ENCODE measurements at regions of chr6 and their contacts with region 1.

Region 1: DNA sequence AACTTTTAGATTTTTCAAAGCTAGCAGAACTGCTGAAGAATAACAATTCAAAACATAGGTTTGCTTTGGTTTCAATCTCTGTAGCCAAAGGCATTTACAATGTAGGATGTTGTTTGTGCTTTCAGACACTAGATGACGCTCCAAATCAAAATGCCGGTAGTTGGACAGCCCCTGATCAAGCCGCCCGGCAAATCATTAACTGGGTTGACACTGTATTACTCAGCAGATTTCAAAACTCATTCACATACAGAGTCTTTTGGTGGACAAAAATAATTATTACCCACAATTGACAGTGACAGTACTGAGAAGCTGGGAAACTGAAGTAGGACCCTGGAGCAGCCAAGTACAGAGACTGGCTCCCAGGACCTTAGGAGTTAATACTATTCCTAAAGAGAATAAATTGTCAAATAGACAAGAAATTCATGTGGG is 21.3 kb upstream of the HFE start:
- DNase-seq: no peak
- H3K4me3 ChIP-seq: no peak overlapping the region
- H3K27ac ChIP-seq: no peak overlapping the region
- H3K4me1 ChIP-seq: no peaks in the 10 kb centered on the region
- H3K27me3 ChIP-seq: no peaks in the 10 kb centered on the region
- CTCF ChIP-seq: peak; percentile 22 to 88 (median 77)
- EP300 ChIP-seq: no peak
- POLR2A ChIP-seq: no peak
- RAD21 ChIP-seq: peak; percentile 87 to 92

Region 2: DNA sequence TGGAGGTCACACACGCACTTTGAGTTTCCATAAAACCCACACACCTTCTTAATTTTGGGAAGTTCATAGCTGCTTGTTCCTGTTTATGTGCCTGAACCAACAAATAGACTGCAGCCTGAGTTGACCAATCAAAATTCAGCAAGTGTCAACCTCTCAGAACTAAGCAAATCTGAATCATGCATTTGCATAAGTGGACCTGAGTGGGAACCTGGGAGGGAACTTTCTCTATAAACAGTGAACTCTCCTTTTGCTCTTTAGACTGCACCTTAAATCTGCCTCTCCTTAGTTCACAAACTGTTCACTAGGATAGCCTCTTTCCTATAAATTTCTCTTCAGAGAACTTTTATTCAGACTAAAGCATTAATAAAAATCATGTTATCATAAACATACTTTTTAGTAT is 272.0 kb before region 1 on chr6:
- CTCF ChIA-PET with region 1: no interaction called
- POLR2A ChIA-PET with region 1: no interaction called
- DNase-seq: no peak
- H3K4me3 ChIP-seq: no peak overlapping the region
- H3K27ac ChIP-seq: no peak overlapping the region
- H3K4me1 ChIP-seq: no peaks in the 10 kb centered on the region
- H3K27me3 ChIP-seq: peaks cover 0 to 1% (median 0%) of the 10 kb centered on the region in 4 experiments; a peak in 1 of 7 replicates
- CTCF ChIP-seq: no peak
- EP300 ChIP-seq: no peak
- POLR2A ChIP-seq: no peak
- RAD21 ChIP-seq: no peak

Region 3: DNA sequence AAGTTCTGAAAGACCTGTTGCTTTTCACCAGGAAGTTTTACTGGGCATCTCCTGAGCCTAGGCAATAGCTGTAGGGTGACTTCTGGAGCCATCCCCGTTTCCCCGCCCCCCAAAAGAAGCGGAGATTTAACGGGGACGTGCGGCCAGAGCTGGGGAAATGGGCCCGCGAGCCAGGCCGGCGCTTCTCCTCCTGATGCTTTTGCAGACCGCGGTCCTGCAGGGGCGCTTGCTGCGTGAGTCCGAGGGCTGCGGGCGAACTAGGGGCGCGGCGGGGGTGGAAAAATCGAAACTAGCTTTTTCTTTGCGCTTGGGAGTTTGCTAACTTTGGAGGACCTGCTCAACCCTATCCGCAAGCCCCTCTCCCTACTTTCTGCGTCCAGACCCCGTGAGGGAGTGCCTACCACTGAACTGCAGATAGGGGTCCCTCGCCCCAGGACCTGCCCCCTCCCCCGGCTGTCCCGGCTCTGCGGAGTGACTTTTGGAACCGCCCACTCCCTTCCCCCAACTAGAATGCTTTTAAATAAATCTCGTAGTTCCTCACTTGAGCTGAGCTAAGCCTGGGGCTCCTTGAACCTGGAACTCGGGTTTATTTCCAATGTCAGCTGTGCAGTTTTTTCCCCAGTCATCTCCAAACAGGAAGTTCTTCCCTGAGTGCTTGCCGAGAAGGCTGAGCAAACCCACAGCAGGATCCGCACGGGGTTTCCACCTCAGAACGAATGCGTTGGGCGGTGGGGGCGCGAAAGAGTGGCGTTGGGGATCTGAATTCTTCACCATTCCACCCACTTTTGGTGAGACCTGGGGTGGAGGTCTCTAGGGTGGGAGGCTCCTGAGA is 21.5 kb after region 1 on chr6 and contains the start of gene HFE:
- CTCF ChIA-PET with region 1: interaction called, 481 read pairs
- POLR2A ChIA-PET with region 1: interaction called, 18 read pairs
- DNase-seq: peak in 1 of 2 experiments; percentile 73
- H3K4me3 ChIP-seq: peak within 1 kb of the TSS; percentile 48 to 65 (median 62)
- H3K27ac ChIP-seq: no peak within 1 kb of the TSS
- H3K4me1 ChIP-seq: peaks cover 0 to 5% (median 1%) of the 10 kb centered on the region in 4 experiments; a peak in 3 of 7 replicates
- H3K27me3 ChIP-seq: no peaks in the 10 kb centered on the region
- CTCF ChIP-seq: peak in 1 of 3 experiments; percentile 1; a peak in 1 of 4 replicates
- EP300 ChIP-seq: no peak
- POLR2A ChIP-seq: peak in 1 of 2 experiments; percentile 55; a peak in 1 of 3 replicates
- RAD21 ChIP-seq: no peak
- total RNA-seq, gene HFE: 1.6 and 2.0 TPM in 2 replicates

Region 4: DNA sequence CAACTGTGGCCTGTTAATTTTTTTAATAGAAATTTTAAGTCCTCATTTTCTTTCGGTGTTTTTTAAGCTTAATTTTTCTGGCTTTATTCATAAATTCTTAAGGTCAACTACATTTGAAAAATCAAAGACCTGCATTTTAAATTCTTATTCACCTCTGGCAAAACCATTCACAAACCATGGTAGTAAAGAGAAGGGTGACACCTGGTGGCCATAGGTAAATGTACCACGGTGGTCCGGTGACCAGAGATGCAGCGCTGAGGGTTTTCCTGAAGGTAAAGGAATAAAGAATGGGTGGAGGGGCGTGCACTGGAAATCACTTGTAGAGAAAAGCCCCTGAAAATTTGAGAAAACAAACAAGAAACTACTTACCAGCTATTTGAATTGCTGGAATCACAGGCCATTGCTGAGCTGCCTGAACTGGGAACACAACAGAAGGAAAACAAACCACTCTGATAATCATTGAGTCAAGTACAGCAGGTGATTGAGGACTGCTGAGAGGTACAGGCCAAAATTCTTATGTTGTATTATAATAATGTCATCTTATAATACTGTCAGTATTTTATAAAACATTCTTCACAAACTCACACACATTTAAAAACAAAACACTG is 31.4 kb after region 1 on chr6:
- CTCF ChIA-PET with region 1: interaction called, 481 read pairs
- POLR2A ChIA-PET with region 1: interaction called, 219 read pairs
- DNase-seq: peak in 1 of 2 experiments; percentile 68
- H3K4me3 ChIP-seq: no peak overlapping the region
- H3K27ac ChIP-seq: no peak overlapping the region
- H3K4me1 ChIP-seq: no peaks in the 10 kb centered on the region
- H3K27me3 ChIP-seq: no peaks in the 10 kb centered on the region
- CTCF ChIP-seq: peak; percentile 58 to 77 (median 65)
- EP300 ChIP-seq: no peak
- POLR2A ChIP-seq: no peak
- RAD21 ChIP-seq: peak; percentile 86 to 87

Region 5: DNA sequence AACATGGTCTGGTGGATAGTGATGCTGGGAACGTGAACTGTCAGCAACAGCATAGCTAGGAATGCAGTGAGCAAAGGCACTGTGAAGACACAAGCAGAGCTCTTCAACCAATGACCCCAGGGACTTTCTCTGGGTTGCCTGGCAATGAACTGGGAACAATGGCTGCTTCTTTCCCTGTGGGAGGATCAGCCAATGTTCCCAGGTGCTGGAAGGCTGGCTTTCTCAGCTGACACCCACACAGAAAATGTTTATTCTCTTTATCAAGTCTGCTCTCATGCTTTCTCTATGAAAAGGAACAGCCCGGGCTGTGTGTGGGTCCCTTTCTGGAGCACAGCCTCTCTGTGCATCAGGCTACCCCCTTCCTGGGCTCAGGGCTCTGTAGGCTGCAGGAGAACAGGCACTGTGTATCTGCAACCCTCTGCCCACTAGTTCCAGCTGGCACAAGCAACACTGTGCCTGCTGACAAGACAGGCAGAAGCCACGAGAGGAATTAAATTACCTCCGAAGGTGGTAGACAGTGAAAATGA is 75.5 kb after region 1 on chr6:
- CTCF ChIA-PET with region 1: no interaction called
- POLR2A ChIA-PET with region 1: no interaction called
- DNase-seq: no peak
- H3K4me3 ChIP-seq: no peak overlapping the region
- H3K27ac ChIP-seq: no peak overlapping the region
- H3K4me1 ChIP-seq: no peaks in the 10 kb centered on the region
- H3K27me3 ChIP-seq: no peaks in the 10 kb centered on the region
- CTCF ChIP-seq: no peak
- EP300 ChIP-seq: no peak
- POLR2A ChIP-seq: no peak
- RAD21 ChIP-seq: no peak

Measured in H1 (cell line).